Activated CD8-positive, alpha-beta memory T cell treated with anti-CD3 and anti-CD28 coated beads, Interleukin-2, amount 10 ng/mL, durations not matched to agents 7 days and 5 days (primary cell): ENCODE measurements at regions of chr14 and their contacts with region 1.

Region 1: GRCh38 chr14:73295198-73295796 is 58.0 kb downstream of the PAPLN start:
- DNase-seq: no peak
- ATAC-seq: no peak
- H3K4me3 Mint-ChIP-seq: no peak overlapping the region
- H3K27ac Mint-ChIP-seq: no peak overlapping the region
- H3K4me1 Mint-ChIP-seq: peaks cover 22% of the 10 kb centered on the region
- H3K27me3 Mint-ChIP-seq: no peaks in the 10 kb centered on the region

Region 2: DNA sequence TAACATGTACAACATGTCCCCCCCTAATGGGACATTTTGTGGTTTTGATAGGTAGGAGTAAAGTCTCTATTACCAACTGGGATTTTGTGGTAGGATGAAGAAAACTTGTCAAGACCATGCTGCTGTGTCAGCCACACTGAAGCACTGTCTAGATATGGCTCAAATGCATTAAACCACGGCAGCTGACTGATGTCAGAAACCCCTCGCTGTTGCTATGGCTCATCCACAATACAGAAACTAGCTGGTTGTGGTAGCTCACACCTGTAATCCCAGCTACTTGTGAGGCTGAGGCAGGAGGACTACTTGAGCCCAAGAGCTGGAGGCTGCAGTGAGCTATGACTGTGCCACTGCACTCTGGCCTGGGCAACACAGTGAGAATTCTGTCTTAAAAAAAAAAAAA is 17.9 kb before region 1 on chr14:
- CTCF ChIA-PET with region 1: no interaction called
- DNase-seq: no peak
- ATAC-seq: no peak
- H3K4me3 Mint-ChIP-seq: no peak overlapping the region
- H3K27ac Mint-ChIP-seq: no peak overlapping the region
- H3K4me1 Mint-ChIP-seq: peaks cover 4% of the 10 kb centered on the region
- H3K27me3 Mint-ChIP-seq: no peaks in the 10 kb centered on the region

Region 3: GRCh38 chr14:73458151-73458976 is 163.1 kb after region 1 on chr14 and contains the start of gene NUMB:
- CTCF ChIA-PET with region 1: interaction called, 13 read pairs
- DNase-seq: peak; percentile 99
- ATAC-seq: peak; percentile 98
- H3K4me3 Mint-ChIP-seq: peak within 1 kb of the TSS; percentile 93
- H3K27ac Mint-ChIP-seq: peak within 1 kb of the TSS; percentile 92
- H3K4me1 Mint-ChIP-seq: peaks cover 43% of the 10 kb centered on the region
- H3K27me3 Mint-ChIP-seq: no peaks in the 10 kb centered on the region
- total RNA-seq, gene NUMB: 44.8 to 45.2 TPM

Region 4: GRCh38 chr14:73463411-73463810 is 168.1 kb after region 1 on chr14:
- CTCF ChIA-PET with region 1: interaction called, 15 read pairs
- DNase-seq: peak; percentile 73
- ATAC-seq: peak; percentile 52
- H3K4me3 Mint-ChIP-seq: no peak overlapping the region
- H3K27ac Mint-ChIP-seq: peak overlapping the region; percentile 86
- H3K4me1 Mint-ChIP-seq: peaks cover 59% of the 10 kb centered on the region
- H3K27me3 Mint-ChIP-seq: no peaks in the 10 kb centered on the region

Region 5: DNA sequence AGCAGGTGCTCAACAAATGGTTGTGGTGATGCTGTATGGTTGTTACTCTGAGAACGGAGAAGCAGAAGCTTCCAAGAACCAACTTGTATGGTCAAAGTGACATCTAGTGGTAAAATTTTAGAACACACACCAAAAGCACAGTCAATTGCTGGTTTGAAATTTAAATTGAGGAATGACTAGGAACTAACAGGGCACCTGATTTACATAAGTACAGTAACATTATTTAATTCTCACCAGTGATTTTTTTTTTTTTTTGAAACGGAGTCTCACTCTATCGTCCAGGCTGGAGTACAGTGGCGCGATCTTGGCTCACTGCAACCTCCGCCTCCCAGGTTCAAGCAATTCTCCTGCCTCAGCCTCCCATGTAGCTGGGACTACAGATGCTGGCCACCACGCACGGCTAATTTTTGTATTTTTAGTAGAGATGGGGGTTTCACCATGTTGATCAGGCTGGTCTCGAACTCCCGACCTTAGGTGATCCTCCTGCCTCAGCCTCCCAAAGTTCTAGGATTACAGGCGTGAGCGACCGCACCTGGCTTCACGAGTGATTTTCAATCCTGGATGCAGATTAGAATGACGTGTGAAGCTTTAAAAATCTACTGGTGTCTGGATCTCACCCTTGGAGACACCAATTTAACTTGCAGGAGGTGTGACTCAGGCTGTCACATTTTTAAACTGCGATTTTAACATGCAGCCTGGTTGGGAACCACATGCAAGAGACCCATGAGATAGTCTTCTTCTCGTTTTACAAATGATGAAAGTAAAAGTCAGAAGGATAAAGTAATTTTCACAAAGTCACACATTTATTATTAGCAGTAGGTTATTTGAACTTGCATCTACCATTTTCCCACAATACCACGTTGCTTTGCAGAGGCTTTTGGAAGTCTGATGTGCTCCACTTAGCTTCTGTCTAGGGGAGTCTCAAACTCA is 177.2 kb after region 1 on chr14:
- CTCF ChIA-PET with region 1: interaction called, 47 read pairs
- DNase-seq: no peak
- ATAC-seq: peak; percentile 81
- H3K4me3 Mint-ChIP-seq: no peak overlapping the region
- H3K27ac Mint-ChIP-seq: no peak overlapping the region
- H3K4me1 Mint-ChIP-seq: peaks cover 7% of the 10 kb centered on the region
- H3K27me3 Mint-ChIP-seq: no peaks in the 10 kb centered on the region